Calu3 (cell line): ENCODE measurements at regions of chr18 and their contacts with region 1.

Region 1: DNA sequence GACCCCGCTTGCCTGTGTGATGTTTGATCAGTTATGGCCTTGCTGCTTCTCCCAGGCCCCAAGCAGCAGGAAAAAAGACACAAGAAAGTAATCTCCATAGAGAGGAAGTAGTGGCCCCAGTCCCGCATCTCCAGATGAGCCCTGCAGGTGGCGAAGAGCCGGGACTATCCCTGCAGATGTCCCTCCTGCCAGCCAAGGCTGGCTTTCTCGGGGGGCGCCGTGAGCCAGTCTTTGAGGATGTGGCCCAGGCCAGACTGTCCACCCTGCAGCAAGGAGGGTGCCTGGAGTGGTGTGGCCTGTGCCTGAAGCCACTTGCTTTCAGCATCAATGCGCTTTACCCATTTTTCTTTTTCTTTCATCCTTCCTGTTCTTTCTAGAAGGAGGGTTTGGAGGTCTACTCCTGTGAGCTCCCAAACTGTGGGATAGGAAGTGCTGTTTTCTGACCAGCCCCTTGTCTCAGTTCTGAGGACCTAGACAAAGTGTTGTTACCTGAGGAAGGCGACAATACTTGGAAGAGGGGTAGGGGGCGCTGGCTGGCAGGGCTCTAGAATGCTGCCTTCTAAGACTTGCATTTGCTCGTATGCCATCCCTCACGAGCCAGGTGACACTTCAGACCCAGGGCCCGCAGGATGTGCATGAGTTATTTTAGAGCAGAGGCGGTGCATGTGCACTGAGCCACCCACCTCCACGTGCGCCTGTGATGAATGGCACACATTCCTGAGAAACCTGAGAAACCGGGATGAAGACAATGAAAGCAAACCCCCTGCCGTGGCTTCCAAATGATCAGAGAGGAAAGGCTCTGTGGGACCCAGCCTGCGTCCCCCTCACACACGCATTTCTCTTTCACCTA is 255.8 kb downstream of the FBXO15 start:
- DNase-seq: no peak
- H3K4me3 Mint-ChIP-seq: no peak overlapping the region
- H3K27ac Mint-ChIP-seq: no peak overlapping the region
- H3K4me1 Mint-ChIP-seq: peaks cover 46% of the 10 kb centered on the region
- H3K27me3 Mint-ChIP-seq: no peaks in the 10 kb centered on the region
- CTCF ChIP-seq: no peak

Region 2: GRCh38 chr18:73908323-73908722 is 16.5 kb after region 1 on chr18:
- CTCF ChIA-PET with region 1: interaction called, 10 read pairs
- intact Hi-C with region 1: no loop called
- DNase-seq: peak; percentile 51
- H3K4me3 Mint-ChIP-seq: no peak overlapping the region
- H3K27ac Mint-ChIP-seq: no peak overlapping the region
- H3K4me1 Mint-ChIP-seq: no peaks in the 10 kb centered on the region
- H3K27me3 Mint-ChIP-seq: no peaks in the 10 kb centered on the region
- CTCF ChIP-seq: no peak